Naive thymus-derived CD4-positive, alpha-beta T cell (primary cell): ENCODE measurements at regions of chr7 and their contacts with region 1.

Region 1: DNA sequence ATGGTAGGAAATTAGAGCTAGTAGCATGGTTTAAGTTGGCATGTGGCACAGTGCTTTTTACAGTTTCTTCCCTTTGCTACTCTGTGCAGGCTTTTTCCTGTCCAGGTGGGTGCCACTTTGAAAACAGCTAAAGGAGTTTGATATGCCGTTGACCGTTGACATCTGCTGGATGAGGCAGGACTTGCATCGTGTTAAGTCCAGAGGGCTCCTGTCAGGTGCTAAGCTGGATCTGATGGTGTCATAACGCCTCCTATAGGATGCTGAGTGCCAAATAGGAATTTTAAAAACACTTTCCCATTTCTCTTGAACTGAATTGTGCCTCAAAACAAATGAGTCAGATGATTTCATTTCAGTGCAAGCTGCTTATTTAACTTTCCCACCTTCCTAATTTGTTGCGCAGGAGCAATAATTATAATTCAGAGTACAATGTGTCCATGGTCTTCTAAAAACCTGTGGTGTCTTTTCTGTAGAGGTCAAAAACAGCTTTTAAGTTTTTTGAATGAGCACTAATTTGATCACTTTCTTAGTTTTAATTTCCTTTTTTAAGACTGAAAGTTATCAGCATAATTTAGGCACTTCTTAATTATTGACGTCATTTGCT is 178.3 kb downstream of the CDCA7L start:
- DNase-seq: peak in 2 of 9 donors; percentile 0 to 26
- ATAC-seq: no peak
- H3K4me3 ChIP-seq: no peak overlapping the region
- H3K4me3 Mint-ChIP-seq: no peak overlapping the region
- H3K27ac ChIP-seq: no peak overlapping the region
- H3K27ac Mint-ChIP-seq: no peak overlapping the region
- H3K4me1 ChIP-seq: no peaks in the 10 kb centered on the region
- H3K4me1 Mint-ChIP-seq: peaks cover 0 to 14% (median 0%) of the 10 kb centered on the region in 7 donors
- H3K27me3 ChIP-seq: no peaks in the 10 kb centered on the region
- H3K27me3 Mint-ChIP-seq: peaks cover 0 to 15% (median 0%) of the 10 kb centered on the region in 5 donors

Region 2: GRCh38 chr7:20786779-20787659 is 980.4 kb before region 1 on chr7 and contains the start of gene SP8:
- CTCF ChIA-PET with region 1: no interaction called
- POLR2A ChIA-PET with region 1: no interaction called
- intact Hi-C with region 1: loop called in 1 of 2 experiments (anchors 5 kb)
- DNase-seq: peak in 1 of 9 donors; percentile 12
- ATAC-seq: peak; percentile 10
- H3K4me3 ChIP-seq: no peak within 1 kb of the TSS
- H3K4me3 Mint-ChIP-seq: peak within 1 kb of the TSS; percentile 69 to 86 (median 80)
- H3K27ac ChIP-seq: no peak within 1 kb of the TSS
- H3K27ac Mint-ChIP-seq: peak within 1 kb of the TSS in 5 of 9 donors; percentile 19 to 81 (median 53)
- H3K4me1 ChIP-seq: no peaks in the 10 kb centered on the region
- H3K4me1 Mint-ChIP-seq: peaks cover 17 to 36% (median 26%) of the 10 kb centered on the region in 7 donors
- H3K27me3 ChIP-seq: peaks cover 0 to 47% of the 10 kb centered on the region in 2 donors
- H3K27me3 Mint-ChIP-seq: peaks cover 75 to 86% (median 81%) of the 10 kb centered on the region in 5 donors
- total RNA-seq, gene SP8: not detected

Region 3: DNA sequence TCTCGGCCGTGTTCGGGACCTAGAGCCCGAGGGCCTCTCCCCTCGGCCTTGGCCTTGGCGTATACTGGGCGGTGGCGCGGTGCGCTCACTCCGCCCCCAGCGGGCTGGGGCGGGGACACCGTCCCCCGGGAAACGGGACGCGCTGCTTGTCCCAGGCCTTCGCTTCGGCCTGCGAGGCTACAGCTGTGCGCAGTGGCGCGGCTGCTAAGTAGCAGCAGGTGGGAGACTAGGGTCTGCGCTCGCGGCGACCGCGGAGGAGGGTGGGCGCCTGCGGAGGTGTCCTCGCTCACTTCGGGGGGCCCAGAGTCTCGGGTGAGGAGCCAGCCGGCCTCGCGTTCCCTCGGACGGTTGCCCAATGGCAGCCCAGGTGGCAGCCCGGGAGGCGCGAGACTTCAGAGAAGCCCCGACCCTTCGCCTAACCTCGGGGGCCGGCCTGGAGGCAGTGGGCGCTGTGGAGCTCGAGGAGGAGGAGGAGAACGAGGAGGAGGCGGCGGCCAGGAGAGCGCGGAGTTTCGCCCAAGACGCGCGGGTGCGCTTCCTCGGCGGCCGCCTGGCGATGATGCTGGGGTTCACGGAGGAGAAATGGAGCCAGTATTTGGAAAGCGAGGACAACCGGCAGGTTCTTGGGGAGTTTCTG is 224.4 kb before region 1 on chr7 and contains the start of gene DNAH11:
- CTCF ChIA-PET with region 1: no interaction called
- POLR2A ChIA-PET with region 1: no interaction called
- intact Hi-C with region 1: loop called in 1 of 2 experiments (anchors 10 kb)
- DNase-seq: peak in 1 of 9 donors; percentile 59
- ATAC-seq: peak; percentile 65
- H3K4me3 ChIP-seq: no peak within 1 kb of the TSS
- H3K4me3 Mint-ChIP-seq: peak within 1 kb of the TSS; percentile 35 to 83 (median 62)
- H3K27ac ChIP-seq: no peak within 1 kb of the TSS
- H3K27ac Mint-ChIP-seq: peak within 1 kb of the TSS in 1 of 9 donors; percentile 67
- H3K4me1 ChIP-seq: no peaks in the 10 kb centered on the region
- H3K4me1 Mint-ChIP-seq: peaks cover 4 to 27% (median 6%) of the 10 kb centered on the region in 7 donors
- H3K27me3 ChIP-seq: no peaks in the 10 kb centered on the region
- H3K27me3 Mint-ChIP-seq: peaks cover 45 to 72% (median 59%) of the 10 kb centered on the region in 5 donors
- total RNA-seq, gene DNAH11: 0.03 to 8.1 (median 0.23) TPM in 4 of 5 experiments, not detected in the other

Region 4: GRCh38 chr7:23216021-23216420 is 1448.6 kb after region 1 on chr7:
- CTCF ChIA-PET with region 1: no interaction called
- POLR2A ChIA-PET with region 1: no interaction called
- intact Hi-C with region 1: no loop called
- DNase-seq: no peak
- ATAC-seq: peak; percentile 64
- H3K4me3 ChIP-seq: no peak overlapping the region
- H3K4me3 Mint-ChIP-seq: no peak overlapping the region
- H3K27ac ChIP-seq: no peak overlapping the region
- H3K27ac Mint-ChIP-seq: no peak overlapping the region
- H3K4me1 ChIP-seq: no peaks in the 10 kb centered on the region
- H3K4me1 Mint-ChIP-seq: peaks cover 0 to under 1% (median 0%) of the 10 kb centered on the region in 7 donors
- H3K27me3 ChIP-seq: no peaks in the 10 kb centered on the region
- H3K27me3 Mint-ChIP-seq: peaks cover 4 to 30% (median 9%) of the 10 kb centered on the region in 5 donors